Activated T-helper 2 cell treated with anti-CD3 and anti-CD28 coated beads, Interferon-gamma antibody, Interleukin-2, Interleukin-4, amounts not matched to agents 10 μg/mL and 5 μg/mL and 100 μg/mL, durations not matched to agents 14 hours and 24 hours and 36 hours (primary cell): ENCODE measurements at regions of chr11 and their contacts with region 1.

Region 1: DNA sequence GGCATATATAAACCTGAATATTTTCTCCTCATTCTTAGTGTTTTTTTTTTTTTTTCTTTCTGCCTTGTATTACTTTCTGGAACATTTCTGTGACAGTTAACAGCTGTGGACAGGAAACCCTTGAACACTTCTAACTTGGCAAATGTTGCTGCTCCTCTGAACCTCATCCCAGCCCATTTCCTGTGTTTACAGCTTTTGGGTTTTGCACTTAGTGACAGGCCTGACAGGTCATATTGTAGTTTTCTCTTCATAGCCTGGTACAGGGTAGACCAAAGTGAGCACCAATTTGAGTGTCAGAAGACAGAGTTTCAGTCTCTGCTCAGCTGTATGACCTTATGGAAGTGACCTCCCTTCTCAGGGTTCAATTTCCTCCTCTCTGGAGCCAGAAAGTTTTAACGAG is 91.6 kb downstream of the STIM1 start:
- DNase-seq: peak; percentile 61
- H3K4me3 Mint-ChIP-seq: peak overlapping the region; percentile 63
- H3K27ac Mint-ChIP-seq: peak overlapping the region; percentile 93
- H3K4me1 Mint-ChIP-seq: peaks cover 90% of the 10 kb centered on the region
- H3K27me3 Mint-ChIP-seq: no peaks in the 10 kb centered on the region

Region 2: DNA sequence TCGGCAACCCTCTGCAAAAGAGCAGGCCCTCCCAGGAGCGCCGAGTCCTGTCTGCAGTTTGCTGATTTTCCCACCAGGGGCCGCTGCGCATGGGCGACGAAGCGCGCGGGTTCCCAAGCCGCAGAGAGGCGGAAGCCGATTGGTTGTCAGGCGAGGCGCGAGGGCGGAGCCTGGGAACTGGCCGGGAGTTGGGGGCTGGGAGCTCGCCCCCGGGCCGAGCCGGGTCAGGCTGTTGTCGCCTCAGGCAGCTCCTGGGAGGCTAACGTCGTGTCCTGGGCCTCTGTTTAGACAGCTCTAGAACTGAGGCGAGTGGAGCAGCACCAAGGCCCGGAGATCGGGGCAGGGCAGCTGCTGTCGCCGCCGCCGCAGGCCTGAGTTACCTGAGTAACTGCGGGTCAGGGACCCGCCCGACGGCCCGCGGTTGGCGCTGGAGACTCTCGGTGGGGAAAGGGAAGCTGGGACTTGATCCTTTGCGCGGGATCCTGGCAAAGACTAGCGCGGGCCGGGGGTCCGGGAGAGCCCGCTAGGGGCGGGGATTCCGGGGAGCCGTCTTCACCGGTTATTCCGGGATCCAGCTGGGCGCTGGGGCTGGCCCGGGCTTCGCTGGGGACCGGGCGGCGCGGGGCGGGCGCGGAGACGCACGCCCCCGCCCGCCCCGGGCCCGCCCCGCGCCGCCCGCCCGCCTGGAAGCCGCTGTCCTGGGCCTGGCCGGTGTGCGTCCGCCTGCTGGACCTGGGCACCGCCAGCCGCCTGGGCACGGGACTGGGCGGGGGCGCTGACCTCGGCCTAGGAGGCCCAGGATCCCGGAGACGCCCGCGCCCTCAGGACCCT is 91.9 kb before region 1 on chr11 and contains the start of gene STIM1:
- intact Hi-C with region 1: loop called (anchors 5 kb)
- DNase-seq: peak; percentile 98
- H3K4me3 Mint-ChIP-seq: peak within 1 kb of the TSS; percentile 99
- H3K27ac Mint-ChIP-seq: peak within 1 kb of the TSS; percentile 96
- H3K4me1 Mint-ChIP-seq: peaks cover 52% of the 10 kb centered on the region
- H3K27me3 Mint-ChIP-seq: no peaks in the 10 kb centered on the region
- total RNA-seq, gene STIM1: 77.6 and 78.0 TPM in 2 replicates

Region 3: DNA sequence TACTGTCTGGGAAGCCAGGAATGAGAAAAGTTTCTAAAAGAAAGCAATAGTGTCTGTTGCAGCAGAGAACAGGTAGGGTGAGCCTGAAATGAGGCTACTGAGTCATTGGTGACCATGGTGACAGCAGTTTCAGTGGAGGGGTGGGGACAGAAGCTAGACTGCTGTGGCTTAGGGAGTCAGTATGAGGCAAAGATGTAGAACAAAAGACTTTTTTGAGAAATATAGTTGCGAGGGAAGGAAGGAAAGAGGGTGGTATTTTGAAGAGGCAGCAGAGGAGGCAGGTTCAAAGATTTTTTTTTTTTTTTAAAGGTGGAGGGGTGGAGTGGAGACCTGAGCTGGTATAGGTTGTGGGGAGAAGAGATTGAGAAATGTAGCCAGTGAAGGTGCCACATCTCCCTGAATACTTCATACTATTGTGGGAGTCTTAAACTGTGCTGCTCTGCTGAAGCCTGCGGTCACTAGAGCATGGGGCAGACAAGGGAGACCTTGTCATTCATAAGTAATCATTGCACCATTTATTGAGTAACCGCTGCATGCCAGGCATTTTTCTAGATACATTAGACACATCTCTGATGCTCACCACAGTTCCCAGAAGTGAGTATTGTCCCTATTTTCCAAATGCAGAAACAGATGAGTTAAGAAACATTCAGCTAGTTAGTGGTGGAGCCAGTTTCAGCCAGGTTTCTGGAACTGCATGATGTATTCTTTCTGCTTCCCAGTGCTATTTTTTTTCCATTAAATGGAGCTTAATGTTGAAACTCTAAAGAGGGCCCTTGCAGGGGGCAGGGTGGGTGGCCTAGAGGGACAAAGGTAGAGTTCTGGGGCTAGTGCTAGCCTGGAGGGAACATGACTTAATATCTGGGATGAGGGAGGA is 41.7 kb before region 1 on chr11:
- intact Hi-C with region 1: loop called (anchors 5 kb)
- DNase-seq: peak; percentile 58
- H3K4me3 Mint-ChIP-seq: peak overlapping the region; percentile 1
- H3K27ac Mint-ChIP-seq: peak overlapping the region; percentile 71
- H3K4me1 Mint-ChIP-seq: peaks cover 67% of the 10 kb centered on the region
- H3K27me3 Mint-ChIP-seq: no peaks in the 10 kb centered on the region

Region 4: GRCh38 chr11:3920148-3920852 is 26.8 kb before region 1 on chr11:
- intact Hi-C with region 1: loop called (anchors 2 kb)
- DNase-seq: peak; percentile 64
- H3K4me3 Mint-ChIP-seq: no peak overlapping the region
- H3K27ac Mint-ChIP-seq: peak overlapping the region; percentile 50
- H3K4me1 Mint-ChIP-seq: peaks cover 58% of the 10 kb centered on the region
- H3K27me3 Mint-ChIP-seq: no peaks in the 10 kb centered on the region

Region 5: GRCh38 chr11:3959015-3959919 is 12.2 kb after region 1 on chr11:
- intact Hi-C with region 1: no loop called
- DNase-seq: no peak
- H3K4me3 Mint-ChIP-seq: no peak overlapping the region
- H3K27ac Mint-ChIP-seq: peak overlapping the region; percentile 39
- H3K4me1 Mint-ChIP-seq: peaks cover 57% of the 10 kb centered on the region
- H3K27me3 Mint-ChIP-seq: no peaks in the 10 kb centered on the region

Region 6: DNA sequence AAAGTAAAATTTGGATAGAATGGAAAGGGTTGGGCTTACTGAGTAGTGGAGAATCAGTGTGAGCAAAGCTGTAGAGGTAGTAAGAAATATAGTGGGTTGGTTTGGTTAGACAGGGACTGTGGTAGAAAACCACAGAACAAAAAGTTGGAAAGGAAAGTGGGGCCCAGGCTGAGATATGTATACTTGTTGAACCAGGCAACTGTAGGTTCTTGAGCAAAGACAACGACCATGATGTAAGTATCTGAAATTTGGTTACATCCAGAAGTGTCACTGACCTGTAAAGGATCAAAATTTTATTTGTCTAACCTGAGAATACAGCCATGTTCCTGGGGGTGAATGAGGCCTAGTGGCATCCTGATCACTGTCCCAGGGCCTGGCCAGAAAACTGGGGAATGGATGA is 22.6 kb after region 1 on chr11:
- intact Hi-C with region 1: loop called (anchors 1 kb)
- DNase-seq: no peak
- H3K4me3 Mint-ChIP-seq: peak overlapping the region; percentile 48
- H3K27ac Mint-ChIP-seq: peak overlapping the region; percentile 88
- H3K4me1 Mint-ChIP-seq: peaks cover 52% of the 10 kb centered on the region
- H3K27me3 Mint-ChIP-seq: no peaks in the 10 kb centered on the region

Region 7: DNA sequence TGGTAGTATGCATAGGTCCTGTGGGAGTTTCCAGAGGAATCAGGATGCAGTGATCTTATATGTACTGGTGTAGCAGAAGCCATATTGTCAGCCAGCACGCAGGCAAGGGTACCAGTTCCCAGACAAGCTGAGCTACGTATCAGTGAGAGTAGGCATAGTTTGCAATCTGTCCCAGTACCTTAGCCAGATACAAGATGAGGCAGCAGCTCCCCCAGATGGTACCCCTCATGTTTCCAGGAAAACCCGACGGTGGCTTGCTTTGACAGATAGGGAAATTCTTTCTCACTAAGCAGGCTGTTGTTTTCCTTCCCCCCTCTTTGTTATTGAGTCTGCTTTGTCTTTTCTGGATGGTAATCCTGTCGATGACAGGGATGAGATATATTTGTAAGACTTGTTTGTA is 37.8 kb after region 1 on chr11:
- intact Hi-C with region 1: loop called (anchors 5 kb)
- DNase-seq: no peak
- H3K4me3 Mint-ChIP-seq: no peak overlapping the region
- H3K27ac Mint-ChIP-seq: peak overlapping the region; percentile 73
- H3K4me1 Mint-ChIP-seq: peaks cover 54% of the 10 kb centered on the region
- H3K27me3 Mint-ChIP-seq: no peaks in the 10 kb centered on the region

Region 8: GRCh38 chr11:4072668-4073285 is 125.7 kb after region 1 on chr11:
- intact Hi-C with region 1: loop called (anchors 5 kb)
- DNase-seq: no peak
- H3K4me3 Mint-ChIP-seq: no peak overlapping the region
- H3K27ac Mint-ChIP-seq: no peak overlapping the region
- H3K4me1 Mint-ChIP-seq: peaks cover 21% of the 10 kb centered on the region
- H3K27me3 Mint-ChIP-seq: no peaks in the 10 kb centered on the region